ENCODE measurements at regions of chr7 and their contacts with region 1.

Region 1: DNA sequence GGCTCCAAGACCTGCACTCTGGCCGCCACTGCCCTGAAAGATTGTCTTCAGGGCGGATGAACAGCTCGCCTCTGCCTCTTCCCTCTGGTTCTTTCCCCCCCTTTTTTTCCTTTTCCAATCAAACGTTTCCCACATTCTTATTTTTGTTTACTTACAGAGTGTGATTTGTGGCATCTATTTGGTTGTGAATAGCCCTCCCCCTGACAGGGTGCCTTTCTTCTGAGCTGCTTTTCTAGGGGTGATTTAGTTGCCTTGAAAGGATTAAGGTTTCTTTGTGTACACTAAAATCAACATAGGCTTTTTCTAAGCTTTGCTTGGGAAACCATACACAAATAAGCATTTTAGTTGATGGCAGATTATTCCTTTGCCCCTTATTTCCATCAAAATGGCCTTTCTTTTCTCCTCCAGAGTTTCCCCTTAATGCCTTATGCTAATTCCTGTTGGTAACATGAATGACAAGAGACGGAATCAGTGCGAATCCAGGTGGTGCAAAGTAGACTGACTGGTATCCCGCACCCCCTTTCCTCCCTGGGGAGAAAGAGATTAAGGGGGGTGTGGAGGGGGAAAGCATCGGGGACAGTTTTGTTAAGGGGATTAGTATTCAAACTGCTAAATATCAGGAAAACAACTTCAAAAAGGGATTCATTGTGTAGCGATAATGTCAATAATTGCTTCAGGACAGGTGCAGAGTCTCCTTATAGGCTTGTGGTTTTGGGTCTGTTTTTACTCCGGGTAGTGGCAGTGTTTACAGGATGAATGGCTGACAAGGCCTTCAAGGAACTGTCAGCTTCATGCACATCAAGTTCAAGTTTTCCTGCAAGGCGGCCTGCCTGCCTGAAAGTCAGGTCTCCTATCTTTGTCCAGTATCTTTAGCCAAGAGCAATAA is 431.6 kb upstream of the GALNT17 start:
- DNase-seq: no peak
- ATAC-seq: no peak

Region 2: DNA sequence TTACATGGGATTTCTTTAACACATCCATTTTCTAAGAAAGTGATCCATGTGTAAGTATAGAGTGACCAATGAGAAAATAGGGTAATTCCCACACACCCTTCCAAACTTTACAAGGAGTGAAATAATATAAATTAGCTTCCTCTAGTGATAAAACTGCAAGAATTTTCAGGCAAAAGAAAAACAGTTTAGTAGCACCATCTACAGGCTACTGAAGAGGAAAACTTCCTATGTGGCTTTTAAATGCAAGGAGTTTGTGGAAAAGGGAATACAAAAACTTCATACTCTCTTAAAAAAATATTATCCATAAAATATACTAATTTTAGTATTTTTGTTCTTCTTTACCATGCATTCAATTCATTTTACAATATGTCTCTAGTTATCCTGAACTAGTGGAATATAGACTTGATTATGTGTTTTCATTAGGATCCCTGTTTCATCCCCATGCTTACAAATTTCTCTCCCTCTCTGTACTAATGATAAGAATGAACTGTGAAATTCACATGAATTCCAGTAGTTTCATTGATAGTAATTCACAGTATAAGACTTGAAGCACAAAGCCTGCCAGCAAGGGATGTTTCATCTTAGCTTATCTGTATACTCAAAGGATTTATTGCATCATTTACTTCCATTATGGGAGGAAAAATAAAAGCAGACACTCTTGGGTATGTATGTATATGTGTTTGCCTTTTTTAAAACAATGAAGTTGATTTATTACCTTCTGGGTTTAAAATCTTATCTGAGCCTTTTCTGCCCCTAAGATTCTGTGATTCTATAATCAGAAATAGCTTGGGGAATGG is 659.1 kb before region 1 on chr7:
- intact Hi-C with region 1: loop called (anchors 10 kb)
- DNase-seq: no peak
- ATAC-seq: peak; percentile 44